ENCODE measurements at regions of chr2 and their contacts with region 1.

Region 1: DNA sequence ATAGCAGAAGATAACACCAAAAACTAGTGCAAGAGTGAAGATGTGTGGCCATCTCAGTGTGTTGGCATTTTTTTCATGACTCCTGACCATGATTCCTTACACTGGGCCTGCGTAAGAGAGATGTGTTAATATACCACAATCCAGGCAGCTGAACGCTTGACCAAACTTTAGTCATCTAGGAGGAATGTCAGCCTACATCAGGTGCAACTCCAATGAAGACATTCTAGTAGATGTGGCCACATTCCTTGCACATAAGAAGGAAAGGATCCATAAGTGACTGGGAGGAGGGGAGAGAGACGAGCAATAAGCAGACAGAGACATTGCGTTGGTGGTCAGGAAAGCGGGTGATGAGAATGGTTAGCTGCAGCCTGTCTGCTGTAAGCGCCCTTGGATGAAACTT is 42.6 kb downstream of the CYRIA start:
- DNase-seq: no peak
- H3K4me3 Mint-ChIP-seq: peak overlapping the region; percentile 3
- H3K27ac Mint-ChIP-seq: no peak overlapping the region
- H3K4me1 Mint-ChIP-seq: peaks cover 42% of the 10 kb centered on the region
- H3K27me3 Mint-ChIP-seq: peaks cover 2% of the 10 kb centered on the region

Region 2: GRCh38 chr2:16665748-16666448 is 42.9 kb after region 1 on chr2 and contains the start of gene CYRIA:
- intact Hi-C with region 1: loop called (anchors 5 kb)
- DNase-seq: peak; percentile 89
- H3K4me3 Mint-ChIP-seq: peak within 1 kb of the TSS; percentile 89
- H3K27ac Mint-ChIP-seq: peak within 1 kb of the TSS; percentile 85
- H3K4me1 Mint-ChIP-seq: peaks cover 24% of the 10 kb centered on the region
- H3K27me3 Mint-ChIP-seq: peaks cover 37% of the 10 kb centered on the region
- total RNA-seq, gene CYRIA: 1.7 and 1.8 TPM in 2 replicates

Region 3: GRCh38 chr2:16709769-16710168 is 86.7 kb after region 1 on chr2:
- intact Hi-C with region 1: loop called (anchors 5 kb)
- DNase-seq: no peak
- H3K4me3 Mint-ChIP-seq: no peak overlapping the region
- H3K27ac Mint-ChIP-seq: no peak overlapping the region
- H3K4me1 Mint-ChIP-seq: peaks cover 4% of the 10 kb centered on the region
- H3K27me3 Mint-ChIP-seq: peaks cover 4% of the 10 kb centered on the region

Region 4: GRCh38 chr2:16728351-16729136 is 105.5 kb after region 1 on chr2:
- intact Hi-C with region 1: loop called (anchors 1 kb)
- DNase-seq: no peak
- H3K4me3 Mint-ChIP-seq: peak overlapping the region; percentile 1
- H3K27ac Mint-ChIP-seq: peak overlapping the region; percentile 70
- H3K4me1 Mint-ChIP-seq: peaks cover 25% of the 10 kb centered on the region
- H3K27me3 Mint-ChIP-seq: no peaks in the 10 kb centered on the region